ENCODE measurements at regions of chr16 and their contacts with region 1.

Region 1: GRCh38 chr16:4288148-4288921 is 15.5 kb upstream of the TFAP4 start:
- DNase-seq: peak; percentile 82
- ATAC-seq: peak; percentile 77
- H3K4me3 ChIP-seq: no peak overlapping the region
- H3K27ac ChIP-seq: no peak overlapping the region
- H3K4me1 ChIP-seq: peaks cover 14% of the 10 kb centered on the region
- H3K27me3 ChIP-seq: no peaks in the 10 kb centered on the region
- CTCF ChIP-seq: peak; percentile 73
- POLR2A ChIP-seq: no peak
- RAD21 ChIP-seq: peak; percentile 62

Region 2: DNA sequence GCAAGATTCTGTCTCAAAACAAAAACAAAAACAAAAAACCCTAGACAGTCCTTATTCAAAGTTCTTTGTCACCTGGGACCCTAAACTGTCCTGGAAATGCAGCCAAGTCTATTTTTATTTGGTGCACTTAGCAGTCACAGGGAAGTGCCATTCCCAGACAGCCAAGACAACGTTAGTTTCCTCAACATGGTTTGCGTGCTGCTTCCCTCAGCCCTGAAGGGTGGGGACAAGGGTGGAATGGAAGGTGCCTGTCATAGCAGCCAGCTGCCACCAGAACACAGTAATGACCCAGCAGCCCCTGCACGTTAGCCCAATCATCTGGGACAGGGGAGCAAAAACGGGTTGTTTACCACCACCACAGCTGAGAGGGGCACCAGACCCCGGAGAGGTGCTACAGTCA is 424.7 kb before region 1 on chr16:
- CTCF ChIA-PET with region 1: interaction called, 4 read pairs
- POLR2A ChIA-PET with region 1: interaction called, 12 read pairs
- dilution Hi-C with region 1: no loop called
- in situ Hi-C with region 1: no loop called
- intact Hi-C with region 1: no loop called
- DNase-seq: no peak
- ATAC-seq: no peak
- H3K4me3 ChIP-seq: no peak overlapping the region
- H3K27ac ChIP-seq: no peak overlapping the region
- H3K4me1 ChIP-seq: peaks cover 16% of the 10 kb centered on the region
- H3K27me3 ChIP-seq: no peaks in the 10 kb centered on the region
- CTCF ChIP-seq: no peak
- POLR2A ChIP-seq: no peak
- RAD21 ChIP-seq: no peak

Region 3: DNA sequence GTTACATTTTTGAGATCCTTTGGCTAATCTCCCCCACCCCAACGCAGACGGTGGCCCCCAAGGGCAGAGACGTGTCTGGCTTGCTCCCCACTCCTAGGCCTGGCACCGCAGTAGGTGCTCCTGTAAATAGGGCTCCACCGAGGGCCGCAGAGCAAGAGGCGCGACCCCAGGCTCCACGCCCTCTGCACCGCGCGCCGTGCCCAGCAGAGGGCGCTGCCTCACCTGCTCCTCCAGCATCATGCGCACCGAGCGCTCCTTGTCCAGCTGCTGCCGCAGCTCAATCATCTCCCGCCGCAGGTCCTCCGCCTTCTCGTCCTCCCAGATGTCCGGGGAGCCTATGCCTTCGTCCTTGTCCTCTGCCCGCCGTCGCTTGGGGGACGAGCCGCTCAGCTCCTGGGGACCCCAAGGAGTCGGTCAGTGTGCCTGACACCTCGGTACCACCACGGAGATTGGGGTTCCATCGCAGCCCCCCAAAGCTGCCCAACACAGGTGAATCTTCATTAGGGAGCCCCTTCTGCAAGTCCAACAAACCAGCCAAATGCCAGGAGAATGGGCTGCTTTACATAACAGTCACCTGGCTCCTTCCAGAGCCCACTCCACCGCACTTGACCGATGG is 26.7 kb before region 1 on chr16:
- CTCF ChIA-PET with region 1: no interaction called
- POLR2A ChIA-PET with region 1: no interaction called
- dilution Hi-C with region 1: no loop called
- in situ Hi-C with region 1: no loop called
- intact Hi-C with region 1: no loop called
- DNase-seq: peak; percentile 16
- ATAC-seq: no peak
- H3K4me3 ChIP-seq: no peak overlapping the region
- H3K27ac ChIP-seq: no peak overlapping the region
- H3K4me1 ChIP-seq: peaks cover 13% of the 10 kb centered on the region
- H3K27me3 ChIP-seq: no peaks in the 10 kb centered on the region
- CTCF ChIP-seq: peak; percentile 46
- POLR2A ChIP-seq: no peak
- RAD21 ChIP-seq: peak; percentile 63

Region 4: GRCh38 chr16:4330277-4330874 is 42.0 kb after region 1 on chr16:
- CTCF ChIA-PET with region 1: interaction called, 11 read pairs
- POLR2A ChIA-PET with region 1: no interaction called
- dilution Hi-C with region 1: no loop called
- in situ Hi-C with region 1: no loop called
- intact Hi-C with region 1: loop called (anchors 2 kb)
- DNase-seq: peak; percentile 63
- ATAC-seq: peak; percentile 79
- H3K4me3 ChIP-seq: no peak overlapping the region
- H3K27ac ChIP-seq: no peak overlapping the region
- H3K4me1 ChIP-seq: peaks cover 20% of the 10 kb centered on the region
- H3K27me3 ChIP-seq: no peaks in the 10 kb centered on the region
- CTCF ChIP-seq: peak; percentile 96
- POLR2A ChIP-seq: no peak
- RAD21 ChIP-seq: peak; percentile 97

Region 5: GRCh38 chr16:4371357-4372000 is 83.1 kb after region 1 on chr16 and contains the start of gene VASN:
- CTCF ChIA-PET with region 1: no interaction called
- POLR2A ChIA-PET with region 1: interaction called, 11 read pairs
- dilution Hi-C with region 1: no loop called
- in situ Hi-C with region 1: no loop called
- intact Hi-C with region 1: no loop called
- DNase-seq: peak; percentile 75
- ATAC-seq: peak; percentile 63
- H3K4me3 ChIP-seq: peak within 1 kb of the TSS; percentile 87
- H3K27ac ChIP-seq: peak within 1 kb of the TSS; percentile 99
- H3K4me1 ChIP-seq: peaks cover 41% of the 10 kb centered on the region
- H3K27me3 ChIP-seq: no peaks in the 10 kb centered on the region
- CTCF ChIP-seq: no peak
- POLR2A ChIP-seq: peak; percentile 99
- RAD21 ChIP-seq: no peak
- total RNA-seq, gene VASN: 9.3 and 10.3 TPM in 2 replicates

Region 6: GRCh38 chr16:4425378-4426020 is 137.2 kb after region 1 on chr16 and contains the start of gene DNAJA3:
- CTCF ChIA-PET with region 1: no interaction called
- POLR2A ChIA-PET with region 1: no interaction called
- dilution Hi-C with region 1: no loop called
- in situ Hi-C with region 1: no loop called
- intact Hi-C with region 1: no loop called
- DNase-seq: peak; percentile 96
- ATAC-seq: peak; percentile 97
- H3K4me3 ChIP-seq: peak within 1 kb of the TSS; percentile 61
- H3K27ac ChIP-seq: peak within 1 kb of the TSS; percentile 91
- H3K4me1 ChIP-seq: peaks cover 5% of the 10 kb centered on the region; the same call in 1 of the 2 replicates
- H3K27me3 ChIP-seq: no peaks in the 10 kb centered on the region
- CTCF ChIP-seq: no peak
- POLR2A ChIP-seq: peak; percentile 92
- RAD21 ChIP-seq: 0 out of 2 replicates have a peak, but pooled peaks have one; percentile 9
- total RNA-seq, gene DNAJA3: 36.9 and 38.0 TPM in 2 replicates

Measured in IMR-90 (cell line).